Tibial artery (tissue), 4 donors: ENCODE measurements at regions of chr12 and their contacts with region 1.

Region 1: GRCh38 chr12:51217968-51218606 is at the start of gene POU6F1:
- DNase-seq: peak; percentile 66 to 86
- H3K4me3 ChIP-seq: peak within 1 kb of the TSS; percentile 82 to 94
- H3K27ac ChIP-seq: peak within 1 kb of the TSS; percentile 97 to 98
- H3K4me1 ChIP-seq: peaks cover 0 to 28% (median 11%) of the 10 kb centered on the region in 4 donors
- H3K27me3 ChIP-seq: no peaks in the 10 kb centered on the region
- CTCF ChIP-seq: peak; percentile 48 to 84

Region 2: GRCh38 chr12:51172515-51173431 is 45.3 kb before region 1 on chr12 and contains the start of gene TFCP2:
- intact Hi-C with region 1: loop called (anchors 2 kb)
- DNase-seq: peak; percentile 97 to 98
- H3K4me3 ChIP-seq: peak within 1 kb of the TSS; percentile 67 to 91
- H3K27ac ChIP-seq: peak within 1 kb of the TSS; percentile 97
- H3K4me1 ChIP-seq: peaks cover 0 to 28% (median 14%) of the 10 kb centered on the region in 4 donors
- H3K27me3 ChIP-seq: no peaks in the 10 kb centered on the region
- CTCF ChIP-seq: no peak

Region 3: GRCh38 chr12:51262758-51263177 is 44.7 kb after region 1 on chr12:
- intact Hi-C with region 1: loop called (anchors 2 kb)
- DNase-seq: no peak
- H3K4me3 ChIP-seq: no peak overlapping the region
- H3K27ac ChIP-seq: no peak overlapping the region
- H3K4me1 ChIP-seq: no peaks in the 10 kb centered on the region
- H3K27me3 ChIP-seq: no peaks in the 10 kb centered on the region
- CTCF ChIP-seq: peak; percentile 13 to 16